ENCODE measurements at regions of chr15 and their contacts with region 1.

Region 1: GRCh38 chr15:84588053-84588874 is 12.5 kb upstream of the ZSCAN2 start:
- DNase-seq: peak; percentile 87
- H3K4me3 Mint-ChIP-seq: peak overlapping the region; percentile 43
- H3K27ac Mint-ChIP-seq: no peak overlapping the region
- H3K4me1 Mint-ChIP-seq: peaks cover 4% of the 10 kb centered on the region
- H3K27me3 Mint-ChIP-seq: peaks cover 14% of the 10 kb centered on the region

Region 2: DNA sequence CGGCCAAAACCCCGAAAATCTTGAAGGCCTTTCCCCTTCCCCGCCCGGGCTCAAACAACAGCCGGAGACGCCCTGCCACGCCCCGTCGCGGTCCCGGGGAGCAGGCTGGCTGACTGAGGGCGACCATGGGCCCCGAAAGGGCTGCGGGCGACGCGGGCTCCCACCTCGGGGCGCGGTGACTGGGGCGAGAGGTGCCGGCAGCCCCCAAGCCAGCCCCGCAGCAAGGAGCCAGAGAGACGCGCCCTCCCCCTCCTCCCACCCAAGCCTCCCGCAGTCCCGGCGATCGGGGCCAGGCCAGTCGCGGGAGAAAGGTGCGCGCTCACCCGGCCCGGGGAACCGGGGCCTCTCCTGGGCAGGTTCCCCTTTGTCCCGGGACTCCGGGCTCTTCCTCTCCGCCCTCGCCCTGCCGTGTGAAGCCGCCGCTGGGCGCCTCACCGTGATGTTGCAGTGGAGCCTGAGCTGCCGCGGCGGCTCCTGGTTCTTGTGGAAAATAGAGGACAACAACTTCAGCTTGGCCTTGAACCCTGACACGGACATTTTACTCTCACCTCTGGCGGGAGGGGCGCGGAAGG is 18.0 kb before region 1 on chr15:
- CTCF ChIA-PET with region 1: interaction called, 25 read pairs
- POLR2A ChIA-PET with region 1: interaction called, 7 read pairs
- DNase-seq: peak; percentile 70
- H3K4me3 Mint-ChIP-seq: peak overlapping the region; percentile 88
- H3K27ac Mint-ChIP-seq: peak overlapping the region; percentile 79
- H3K4me1 Mint-ChIP-seq: peaks cover 20% of the 10 kb centered on the region
- H3K27me3 Mint-ChIP-seq: peaks cover 2% of the 10 kb centered on the region

Region 3: DNA sequence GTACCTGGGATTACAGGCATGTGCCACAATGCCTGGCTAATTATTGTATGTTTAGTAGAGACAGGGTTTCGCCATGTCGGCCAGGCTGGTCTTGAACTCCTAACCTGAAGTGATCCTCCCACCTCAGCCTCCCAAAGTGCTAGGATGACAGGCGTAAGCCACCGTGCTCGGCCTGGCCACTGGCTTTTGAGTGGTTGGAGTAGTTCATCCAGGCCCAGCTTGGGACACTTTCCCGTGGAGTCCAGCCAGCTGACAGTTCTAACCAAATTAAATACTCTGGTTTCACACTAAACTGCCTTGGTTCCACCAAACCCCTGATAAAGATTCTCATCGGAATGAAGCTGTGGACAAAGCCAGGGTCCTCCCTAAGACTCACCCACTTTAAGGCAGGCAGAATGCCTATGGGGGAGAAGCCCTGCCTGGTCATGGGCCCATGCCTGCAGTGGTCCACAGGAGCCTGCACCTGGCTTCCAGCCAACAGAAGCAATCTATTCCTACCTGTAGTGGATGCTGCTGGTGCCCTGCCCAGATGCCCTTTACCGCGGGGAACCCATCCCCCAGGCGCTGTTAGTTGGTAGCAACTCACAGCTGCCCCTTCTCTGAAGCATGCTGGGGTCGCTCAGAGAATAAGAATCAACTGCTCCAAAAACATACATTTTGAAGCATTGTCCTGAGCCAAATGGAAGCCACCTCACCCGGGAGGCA is 291.0 kb after region 1 on chr15:
- CTCF ChIA-PET with region 1: interaction called, 14 read pairs
- POLR2A ChIA-PET with region 1: no interaction called
- DNase-seq: no peak
- H3K4me3 Mint-ChIP-seq: no peak overlapping the region
- H3K27ac Mint-ChIP-seq: no peak overlapping the region
- H3K4me1 Mint-ChIP-seq: no peaks in the 10 kb centered on the region
- H3K27me3 Mint-ChIP-seq: no peaks in the 10 kb centered on the region

Region 4: GRCh38 chr15:84926501-84927230 is 338.4 kb after region 1 on chr15:
- CTCF ChIA-PET with region 1: interaction called, 28 read pairs
- POLR2A ChIA-PET with region 1: no interaction called
- DNase-seq: no peak
- H3K4me3 Mint-ChIP-seq: no peak overlapping the region
- H3K27ac Mint-ChIP-seq: no peak overlapping the region
- H3K4me1 Mint-ChIP-seq: peaks cover 11% of the 10 kb centered on the region
- H3K27me3 Mint-ChIP-seq: no peaks in the 10 kb centered on the region

Measured in activated CD4-positive, alpha-beta memory T cell treated with anti-CD3 and anti-CD28 coated beads, Interleukin-2, amount 10 ng/mL, durations not matched to agents 7 days and 5 days (primary cell).